HEK293 (cell line): ENCODE measurements at regions of chr2 and their contacts with region 1.

Region 1: DNA sequence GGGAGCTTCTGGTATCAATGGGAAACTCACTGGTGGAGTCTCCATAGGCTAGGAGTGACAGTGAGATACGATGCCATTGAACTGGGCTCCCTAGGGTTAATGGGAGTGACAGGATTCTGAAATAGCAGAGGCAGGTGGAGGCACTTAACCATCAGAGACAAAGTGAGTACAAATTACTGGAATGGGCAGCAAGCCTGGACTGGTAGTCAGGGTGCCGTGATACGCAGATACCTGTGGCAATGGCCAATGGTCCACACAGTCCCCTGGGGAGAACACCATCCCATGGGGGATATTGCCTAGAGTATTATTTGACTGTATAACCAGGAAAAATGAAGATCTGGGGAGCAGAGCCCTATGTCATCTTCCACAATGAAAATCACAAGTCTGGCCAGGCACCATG is 17.3 kb downstream of the CHCHD5 start:
- H3K4me3 ChIP-seq: no peak overlapping the region
- H3K27ac ChIP-seq: no peak overlapping the region
- H3K4me1 ChIP-seq: no peaks in the 10 kb centered on the region
- CTCF ChIP-seq: no peak

Region 2: DNA sequence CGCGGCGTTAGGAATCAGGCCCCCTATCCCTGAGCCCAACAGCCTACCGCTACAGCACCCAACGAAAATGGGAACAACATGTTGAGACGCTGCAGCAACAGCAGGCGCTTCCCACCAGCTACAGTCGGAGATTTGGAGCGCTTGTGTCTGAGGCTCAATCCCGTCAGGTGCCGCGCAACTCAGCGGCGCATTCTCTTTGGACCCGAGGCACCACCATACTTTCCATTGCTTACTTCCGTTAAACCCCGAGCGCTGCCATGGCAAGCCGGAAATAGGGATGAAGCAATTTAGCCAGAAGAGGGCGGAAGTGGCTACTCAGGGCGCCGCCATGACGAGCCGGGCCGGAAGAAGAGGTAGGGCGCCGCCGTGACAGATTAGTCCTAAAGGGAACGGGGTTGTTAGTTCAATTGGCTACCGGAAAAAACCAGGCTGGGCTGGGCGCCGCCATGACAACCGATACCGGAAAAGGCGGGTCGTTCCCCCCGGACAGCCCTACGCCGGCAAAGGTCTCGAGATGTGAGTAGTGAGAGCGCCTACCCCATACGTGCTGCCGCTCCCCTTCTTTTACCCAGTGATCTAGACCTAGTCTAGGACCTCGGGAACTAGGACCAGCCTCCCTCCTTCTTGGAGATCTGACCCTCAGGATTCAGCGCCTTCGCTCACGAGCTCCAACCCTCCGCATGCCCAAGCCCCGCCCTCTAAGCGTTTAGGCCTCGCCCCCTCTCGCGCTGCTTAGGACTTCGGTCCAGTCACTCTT is 17.4 kb before region 1 on chr2 and contains the start of gene CHCHD5:
- CTCF ChIA-PET with region 1: interaction called, 14 read pairs
- POLR2A ChIA-PET with region 1: interaction called, 6 read pairs
- H3K4me3 ChIP-seq: peak within 1 kb of the TSS; percentile 75
- H3K27ac ChIP-seq: peak within 1 kb of the TSS; percentile 86
- H3K4me1 ChIP-seq: peaks cover 4% of the 10 kb centered on the region
- CTCF ChIP-seq: peak; percentile 77

Region 3: DNA sequence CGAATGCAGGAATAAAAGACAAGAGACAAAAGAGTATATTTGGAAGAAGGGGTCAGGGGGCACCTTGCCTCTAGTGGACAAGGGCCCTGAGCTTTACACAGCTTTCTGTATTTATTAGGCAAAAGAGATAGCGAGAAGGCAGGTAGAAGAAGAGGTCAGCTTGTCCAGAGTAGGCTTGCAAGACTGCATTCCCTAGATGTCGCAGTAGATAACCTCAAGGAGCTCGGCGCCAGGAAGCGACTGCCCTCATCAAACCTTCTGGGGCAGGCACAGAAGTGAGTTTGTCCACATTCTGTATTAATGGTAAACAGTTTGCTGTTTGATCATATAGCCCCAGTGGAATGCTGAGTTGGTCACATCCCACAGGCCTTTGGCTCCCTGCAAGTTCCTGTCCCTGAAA is 10.4 kb before region 1 on chr2:
- CTCF ChIA-PET with region 1: interaction called, 18 read pairs
- POLR2A ChIA-PET with region 1: interaction called, 3 read pairs
- H3K4me3 ChIP-seq: no peak overlapping the region
- H3K27ac ChIP-seq: no peak overlapping the region
- H3K4me1 ChIP-seq: no peaks in the 10 kb centered on the region
- CTCF ChIP-seq: no peak

Region 4: GRCh38 chr2:112614201-112614840 is 12.6 kb after region 1 on chr2:
- CTCF ChIA-PET with region 1: interaction called, 16 read pairs
- POLR2A ChIA-PET with region 1: no interaction called
- H3K4me3 ChIP-seq: no peak overlapping the region
- H3K27ac ChIP-seq: no peak overlapping the region
- H3K4me1 ChIP-seq: no peaks in the 10 kb centered on the region
- CTCF ChIP-seq: no peak

Region 5: GRCh38 chr2:112626604-112627059 is 24.9 kb after region 1 on chr2:
- CTCF ChIA-PET with region 1: interaction called, 17 read pairs
- POLR2A ChIA-PET with region 1: no interaction called
- H3K4me3 ChIP-seq: no peak overlapping the region
- H3K27ac ChIP-seq: no peak overlapping the region
- H3K4me1 ChIP-seq: peaks cover 8% of the 10 kb centered on the region
- CTCF ChIP-seq: peak; percentile 91